Heart right ventricle (tissue), 16 donors: ENCODE measurements at regions of chr2 and their contacts with region 1.

Region 1: GRCh38 chr2:67650291-67651133 is 253.4 kb downstream of the ETAA1 start:
- DNase-seq: peak; percentile 75 to 82
- ATAC-seq: peak; percentile 89 to 94 (median 92)
- H3K4me3 ChIP-seq: no peak overlapping the region
- H3K27ac ChIP-seq: peak overlapping the region; percentile 37 to 88 (median 74)
- H3K4me1 ChIP-seq: peaks cover 6 to 35% (median 23%) of the 10 kb centered on the region in 9 donors
- H3K27me3 ChIP-seq: no peaks in the 10 kb centered on the region
- CTCF ChIP-seq: peak; percentile 34 to 85 (median 64)

Region 2: DNA sequence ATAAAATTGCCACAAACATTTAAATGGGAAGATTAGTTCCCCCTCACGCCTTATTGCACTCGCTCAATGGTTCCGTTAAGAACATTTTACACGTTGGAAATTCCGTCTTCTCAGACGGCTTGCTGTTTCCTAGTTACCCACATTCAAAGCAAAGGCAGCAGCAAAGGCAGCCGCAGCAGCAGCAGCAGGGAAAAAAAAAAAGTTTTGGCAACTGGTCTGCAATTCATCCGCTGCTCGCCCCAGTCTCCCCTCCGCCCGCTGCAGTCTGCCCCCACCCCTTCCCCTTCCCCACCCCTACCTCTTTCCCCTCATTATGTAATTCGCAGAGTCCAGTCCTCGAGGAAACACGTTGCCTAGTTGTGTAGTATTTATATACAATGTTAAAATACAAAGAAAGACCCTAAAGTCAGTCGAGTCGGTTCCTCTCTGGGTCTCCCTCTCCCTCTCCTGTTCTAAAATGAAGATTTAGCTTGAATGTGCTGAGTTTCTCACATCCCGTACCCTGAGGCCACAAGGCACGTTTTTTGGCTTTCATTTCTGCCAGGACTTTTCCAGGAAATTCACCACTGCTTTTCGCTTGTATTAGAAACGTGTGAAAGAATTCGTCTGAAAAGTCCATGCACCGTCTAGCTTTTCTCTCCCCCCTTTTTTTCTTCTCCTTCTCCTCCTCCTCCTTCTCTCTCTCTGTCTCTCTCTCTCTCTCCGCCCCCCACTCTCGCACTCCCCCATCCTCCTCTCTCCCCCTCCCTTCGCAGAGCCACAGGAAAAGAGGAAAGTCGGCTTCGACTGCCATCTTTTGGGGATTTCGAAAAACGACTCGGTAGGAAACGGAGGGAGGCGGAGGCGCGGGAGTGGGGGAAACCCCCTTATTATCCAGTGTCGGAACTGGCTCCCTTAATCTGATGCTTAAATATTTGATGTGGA is 1075.5 kb before region 1 on chr2:
- intact Hi-C with region 1: loop called in 5 of 10 experiments (anchors 5 to 10 kb)
- DNase-seq: peak; percentile 27 to 77
- ATAC-seq: peak; percentile 68 to 83 (median 76)
- H3K4me3 ChIP-seq: peak overlapping the region in 9 of 10 donors; percentile 30 to 63 (median 50)
- H3K27ac ChIP-seq: peak overlapping the region in 5 of 10 donors; percentile 9 to 64 (median 56)
- H3K4me1 ChIP-seq: peaks cover 16 to 46% (median 23%) of the 10 kb centered on the region in 9 donors
- H3K27me3 ChIP-seq: peaks cover 13 to 73% (median 46%) of the 10 kb centered on the region in 7 donors
- CTCF ChIP-seq: peak in 8 of 9 donors; percentile 21 to 70 (median 50)

Region 3: GRCh38 chr2:67259581-67260342 is 390.8 kb before region 1 on chr2:
- intact Hi-C with region 1: loop called in 1 of 10 experiments (anchors 2 kb)
- DNase-seq: peak; percentile 15 to 29
- ATAC-seq: peak in 7 of 8 donors; percentile 48 to 80 (median 64)
- H3K4me3 ChIP-seq: no peak overlapping the region
- H3K27ac ChIP-seq: peak overlapping the region; percentile 18 to 76 (median 60)
- H3K4me1 ChIP-seq: peaks cover 0 to 12% (median 0%) of the 10 kb centered on the region in 9 donors
- H3K27me3 ChIP-seq: no peaks in the 10 kb centered on the region
- CTCF ChIP-seq: no peak

Region 4: DNA sequence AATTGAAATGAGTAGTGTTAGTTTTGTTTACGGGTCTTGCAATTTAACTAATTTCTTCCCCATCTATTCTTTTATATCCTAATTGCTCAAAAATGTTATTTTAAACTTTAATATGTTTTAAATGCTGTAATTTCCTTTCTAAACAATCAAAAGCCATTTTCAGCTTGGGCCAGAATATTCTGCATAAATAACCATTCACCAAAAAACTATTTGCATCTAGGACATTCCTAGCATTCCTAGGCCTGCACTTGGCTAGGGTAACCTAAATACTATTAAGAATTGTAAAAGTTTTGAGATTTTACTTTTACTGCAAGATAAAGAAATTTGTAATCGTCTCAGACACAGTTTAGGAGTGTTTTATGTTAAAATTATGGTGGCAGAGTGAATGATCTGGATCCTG is 261.2 kb before region 1 on chr2:
- intact Hi-C with region 1: no loop called
- DNase-seq: no peak
- ATAC-seq: no peak
- H3K4me3 ChIP-seq: no peak overlapping the region
- H3K27ac ChIP-seq: peak overlapping the region in 1 of 10 donors; percentile 29
- H3K4me1 ChIP-seq: no peaks in the 10 kb centered on the region
- H3K27me3 ChIP-seq: no peaks in the 10 kb centered on the region
- CTCF ChIP-seq: no peak

Region 5: DNA sequence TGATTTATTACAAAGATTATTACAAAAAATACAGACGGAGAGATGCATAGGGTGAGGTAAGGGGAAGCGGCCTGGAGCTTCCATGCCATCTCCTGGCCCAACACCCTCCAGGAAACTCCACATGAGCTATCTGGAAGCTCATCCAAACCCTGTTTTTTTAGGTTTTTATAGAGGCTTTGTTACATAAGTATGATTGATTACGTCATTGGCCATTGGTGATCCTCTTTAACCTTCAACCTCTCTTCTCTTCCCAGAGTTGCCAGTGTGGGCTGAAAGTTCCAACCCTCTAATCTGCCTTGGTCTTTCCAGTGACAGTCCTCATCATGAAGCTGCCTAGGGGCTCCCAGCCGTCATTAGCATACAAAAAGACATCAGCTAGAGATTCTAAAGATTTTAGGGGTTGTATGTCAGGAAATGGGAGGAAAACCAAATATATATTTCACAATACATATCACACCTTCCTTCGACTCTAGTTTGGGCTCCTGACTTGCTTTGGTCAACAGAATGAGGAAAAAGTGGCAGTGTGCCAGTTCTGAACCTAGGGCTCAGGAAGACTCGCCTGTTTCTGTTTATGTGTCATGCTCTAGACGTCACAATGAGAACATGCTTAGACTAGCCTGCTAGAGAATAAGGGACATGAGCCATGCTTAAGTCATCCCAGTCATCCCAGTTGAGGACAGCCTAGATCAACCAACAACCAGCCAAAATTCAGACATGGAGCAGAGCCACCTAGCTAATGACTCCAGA is 199.3 kb before region 1 on chr2:
- intact Hi-C with region 1: loop called in 2 of 10 experiments (anchors 2 to 5 kb)
- DNase-seq: no peak
- ATAC-seq: no peak
- H3K4me3 ChIP-seq: no peak overlapping the region
- H3K27ac ChIP-seq: no peak overlapping the region
- H3K4me1 ChIP-seq: peaks cover 0 to 13% (median 0%) of the 10 kb centered on the region in 9 donors
- H3K27me3 ChIP-seq: no peaks in the 10 kb centered on the region
- CTCF ChIP-seq: no peak

Region 6: GRCh38 chr2:67486041-67486796 is 164.3 kb before region 1 on chr2:
- intact Hi-C with region 1: loop called in 2 of 10 experiments (anchors 10 kb)
- DNase-seq: peak in 1 of 2 donors; percentile 33
- ATAC-seq: peak in 6 of 8 donors; percentile 39 to 98 (median 76)
- H3K4me3 ChIP-seq: no peak overlapping the region
- H3K27ac ChIP-seq: no peak overlapping the region
- H3K4me1 ChIP-seq: peaks cover 0 to 11% (median 0%) of the 10 kb centered on the region in 9 donors
- H3K27me3 ChIP-seq: no peaks in the 10 kb centered on the region
- CTCF ChIP-seq: no peak

Region 7: DNA sequence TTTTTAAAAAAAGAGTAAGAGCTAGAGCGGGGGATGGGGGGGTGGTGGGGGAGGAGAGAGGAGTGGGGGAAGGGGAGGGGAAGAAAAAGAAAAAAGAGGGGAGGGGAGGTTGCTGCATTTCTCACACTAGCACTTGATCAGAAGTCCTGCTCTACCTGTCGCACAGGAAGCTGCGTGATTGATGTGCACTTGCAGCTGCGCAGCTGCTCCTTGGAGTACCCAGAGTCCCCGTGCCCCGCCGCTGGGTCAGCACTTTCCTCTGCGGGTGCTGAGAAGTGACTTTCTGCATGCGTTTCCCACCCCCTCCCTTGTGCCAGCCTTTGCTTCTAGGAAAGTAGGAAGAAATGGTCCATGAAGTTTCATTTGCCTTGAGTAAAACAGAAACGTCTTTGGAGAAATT is 43.9 kb after region 1 on chr2:
- intact Hi-C with region 1: no loop called
- DNase-seq: no peak
- ATAC-seq: no peak
- H3K4me3 ChIP-seq: no peak overlapping the region
- H3K27ac ChIP-seq: no peak overlapping the region
- H3K4me1 ChIP-seq: no peaks in the 10 kb centered on the region
- H3K27me3 ChIP-seq: peaks cover 0 to 4% (median 0%) of the 10 kb centered on the region in 7 donors
- CTCF ChIP-seq: no peak

Region 8: DNA sequence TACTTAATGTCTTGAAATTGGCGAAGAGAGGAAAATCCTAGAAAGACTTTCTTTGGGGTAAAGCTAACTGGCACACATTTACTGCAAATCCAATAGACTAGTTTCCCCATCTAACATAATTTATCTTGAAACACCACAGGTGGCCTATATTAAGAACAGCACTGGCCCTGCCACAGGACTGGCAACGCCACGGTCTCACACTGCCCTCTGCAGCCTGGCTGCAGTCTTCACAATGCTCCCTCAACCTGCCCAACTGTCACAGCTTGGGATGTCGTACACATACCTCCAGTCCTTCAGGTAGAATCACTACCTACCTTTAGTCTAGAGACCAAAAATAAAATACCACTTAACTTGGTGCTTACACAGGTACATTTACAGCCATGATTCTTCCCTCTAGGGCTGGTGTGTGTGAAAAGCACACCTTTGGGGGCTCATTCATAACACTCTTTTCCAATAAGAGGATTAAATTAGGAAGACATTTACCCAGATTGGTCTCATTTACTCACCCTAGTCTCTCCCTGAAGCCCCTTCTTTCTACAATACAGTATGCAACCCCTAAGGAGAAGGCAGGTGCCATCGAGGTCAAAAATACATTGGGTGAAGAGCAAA is 190.1 kb after region 1 on chr2:
- intact Hi-C with region 1: loop called in 4 of 10 experiments (anchors 5 to 10 kb)
- DNase-seq: peak; percentile 63 to 66
- ATAC-seq: peak; percentile 91 to 98 (median 96)
- H3K4me3 ChIP-seq: no peak overlapping the region
- H3K27ac ChIP-seq: no peak overlapping the region
- H3K4me1 ChIP-seq: no peaks in the 10 kb centered on the region
- H3K27me3 ChIP-seq: no peaks in the 10 kb centered on the region
- CTCF ChIP-seq: peak; percentile 49 to 88 (median 76)